Activated CD8-positive, alpha-beta memory T cell treated with anti-CD3 and anti-CD28 coated beads, Interleukin-2, amount 10 ng/mL, durations not matched to agents 7 days and 5 days (primary cell): ENCODE measurements at regions of chr1 and their contacts with region 1.

Region 1: DNA sequence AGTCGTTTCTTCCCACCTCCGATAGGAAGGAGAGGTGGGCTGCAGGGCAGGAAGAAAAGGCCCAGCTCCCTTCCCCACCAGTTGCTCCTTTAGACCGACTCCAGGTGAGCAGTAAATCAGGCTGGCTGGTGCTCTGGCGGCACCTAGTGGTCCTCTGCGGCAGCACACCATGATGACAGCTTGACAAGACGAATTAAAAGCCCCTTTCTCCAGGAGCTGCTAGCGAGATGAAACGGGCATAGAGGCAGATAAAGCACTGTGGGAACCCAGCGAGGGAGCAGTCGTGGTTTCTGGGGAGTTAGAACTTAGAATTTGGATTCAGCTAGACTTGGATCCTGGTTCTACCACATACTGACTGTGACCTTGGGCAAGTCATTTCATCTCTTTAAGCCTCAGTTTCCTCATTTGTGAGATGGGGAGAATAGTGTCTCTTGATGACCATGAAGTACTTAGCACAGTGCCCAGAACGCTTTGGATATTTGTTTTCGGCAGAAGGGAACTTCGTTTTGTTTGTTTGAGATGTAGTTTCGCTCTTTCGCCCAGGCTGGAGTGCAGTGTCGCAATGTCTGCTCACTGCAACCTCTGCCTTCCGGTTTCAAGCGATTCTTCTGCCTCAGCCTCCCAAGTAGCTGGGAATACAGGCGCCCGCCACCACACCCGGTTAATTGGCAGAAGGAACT is 21.8 kb upstream of the COL9A2 start:
- DNase-seq: peak; percentile 94
- ATAC-seq: peak; percentile 89
- H3K4me3 Mint-ChIP-seq: no peak overlapping the region
- H3K27ac Mint-ChIP-seq: no peak overlapping the region
- H3K4me1 Mint-ChIP-seq: peaks cover 46% of the 10 kb centered on the region
- H3K27me3 Mint-ChIP-seq: peaks cover 2% of the 10 kb centered on the region

Region 2: DNA sequence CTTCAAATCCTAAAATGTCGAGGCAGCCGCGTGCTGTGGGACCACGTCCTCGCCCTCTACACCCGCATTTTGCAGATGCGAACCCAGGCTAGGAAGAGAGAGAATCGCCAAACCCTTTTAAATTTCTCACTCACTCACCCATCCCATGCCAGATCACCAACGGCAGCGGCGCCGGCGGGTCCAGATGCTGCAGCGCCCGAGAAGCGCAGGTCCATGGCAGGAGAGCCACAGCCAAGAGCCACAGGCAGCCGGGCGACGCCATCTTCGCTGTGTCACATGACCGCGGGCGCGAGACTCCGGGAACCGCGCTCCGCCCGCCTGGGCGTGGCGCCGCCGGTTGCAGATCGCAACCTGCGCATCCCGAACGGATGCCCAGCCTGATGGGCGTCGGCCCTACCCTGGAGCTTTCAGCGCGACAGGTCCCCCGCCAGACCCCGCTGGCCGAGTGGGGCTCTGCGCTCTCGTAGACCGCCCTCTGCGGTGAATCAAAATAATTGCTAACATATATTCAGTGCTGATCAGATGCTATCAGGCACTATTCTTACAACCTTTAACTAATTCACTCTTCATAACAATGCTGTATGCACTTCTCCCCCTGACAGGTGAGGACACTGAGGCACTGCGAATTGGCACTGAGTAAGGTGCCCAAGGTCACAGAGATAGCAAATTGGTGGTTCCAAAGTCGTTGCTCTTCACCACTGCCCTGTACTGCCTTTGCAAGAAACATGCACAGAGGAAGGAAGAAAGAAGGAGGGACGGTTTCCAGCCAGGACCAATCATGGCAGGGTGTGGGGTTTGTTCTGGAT is 241.7 kb before region 1 on chr1 and contains the start of gene PPT1:
- CTCF ChIA-PET with region 1: interaction called, 20 read pairs
- DNase-seq: peak; percentile 87
- ATAC-seq: peak; percentile 95
- H3K4me3 Mint-ChIP-seq: peak within 1 kb of the TSS; percentile 84
- H3K27ac Mint-ChIP-seq: peak within 1 kb of the TSS; percentile 89
- H3K4me1 Mint-ChIP-seq: peaks cover 38% of the 10 kb centered on the region
- H3K27me3 Mint-ChIP-seq: peaks cover 7% of the 10 kb centered on the region
- total RNA-seq, gene PPT1: 74.1 to 96.6 TPM

Region 3: DNA sequence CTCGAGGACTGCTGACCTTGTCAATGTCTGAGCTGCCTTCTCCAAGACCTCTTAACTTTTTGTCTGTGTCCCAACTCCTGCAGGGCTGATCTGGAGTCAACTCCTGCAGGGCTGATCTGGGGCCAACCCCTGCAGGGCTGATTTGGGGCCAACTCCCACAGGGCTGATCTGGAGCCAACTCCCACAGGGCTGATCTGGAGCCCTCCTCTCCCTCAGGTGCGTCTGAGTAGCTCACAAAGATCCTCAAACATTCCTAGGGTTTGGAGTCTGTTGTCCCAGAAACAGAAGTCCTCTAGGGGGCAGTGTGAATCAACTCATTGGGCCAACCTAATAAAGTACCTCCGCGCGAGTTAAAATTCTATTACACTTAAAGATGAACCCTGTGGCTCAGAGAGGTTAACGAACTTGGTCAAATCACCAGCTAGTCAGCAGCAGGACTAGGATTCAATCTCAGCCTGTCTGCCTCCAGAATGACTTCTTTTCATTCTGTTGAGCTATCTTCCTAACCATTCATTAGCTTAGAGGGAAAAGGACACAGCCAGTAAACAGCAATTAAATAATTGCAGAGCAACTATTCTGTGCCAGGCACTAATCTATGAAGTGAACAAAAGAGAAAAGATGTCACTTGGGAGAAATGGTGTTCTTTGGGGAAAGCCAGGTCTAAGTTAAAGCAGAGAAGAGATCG is 194.9 kb before region 1 on chr1:
- CTCF ChIA-PET with region 1: interaction called, 55 read pairs
- DNase-seq: peak; percentile 68
- ATAC-seq: peak; percentile 83
- H3K4me3 Mint-ChIP-seq: no peak overlapping the region
- H3K27ac Mint-ChIP-seq: no peak overlapping the region
- H3K4me1 Mint-ChIP-seq: peaks cover 16% of the 10 kb centered on the region
- H3K27me3 Mint-ChIP-seq: peaks cover 38% of the 10 kb centered on the region

Region 4: DNA sequence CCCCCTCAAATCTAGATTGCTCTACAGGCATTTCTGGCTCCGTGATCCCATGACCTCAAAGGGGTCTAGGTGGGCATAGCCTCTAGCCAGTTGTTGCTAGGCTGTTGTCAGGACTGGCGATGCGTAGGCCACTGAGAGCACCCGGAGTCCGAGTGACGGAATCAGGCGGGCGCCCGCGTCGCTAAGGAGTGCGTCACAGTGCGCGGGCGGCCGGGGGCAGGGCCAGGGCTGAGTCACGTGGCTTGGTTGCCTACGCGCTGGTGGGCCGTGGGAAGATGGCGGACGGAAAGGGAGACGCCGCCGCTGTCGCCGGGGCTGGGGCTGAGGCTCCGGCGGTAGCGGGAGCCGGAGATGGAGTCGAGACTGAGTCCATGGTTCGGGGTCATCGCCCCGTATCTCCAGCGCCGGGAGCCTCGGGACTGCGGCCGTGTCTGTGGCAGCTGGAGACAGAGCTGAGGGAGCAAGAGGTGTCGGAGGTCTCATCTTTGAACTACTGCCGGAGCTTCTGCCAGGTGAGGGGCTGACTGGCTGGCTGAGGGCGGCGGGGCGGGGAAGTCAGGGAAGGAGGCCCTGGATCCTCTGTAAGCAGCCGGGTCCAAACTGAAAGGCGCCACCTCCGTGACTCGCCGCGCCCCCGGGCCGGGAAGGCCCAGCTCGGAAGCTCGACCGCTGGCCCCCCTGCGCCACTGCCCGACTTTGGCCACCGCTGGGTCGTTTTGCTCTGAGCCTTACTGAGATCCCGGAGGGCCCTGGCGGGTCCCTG is 177.6 kb before region 1 on chr1 and contains the start of gene RLF:
- CTCF ChIA-PET with region 1: interaction called, 216 read pairs
- DNase-seq: peak; percentile 96
- ATAC-seq: peak; percentile 97
- H3K4me3 Mint-ChIP-seq: no peak within 1 kb of the TSS
- H3K27ac Mint-ChIP-seq: peak within 1 kb of the TSS; percentile 35
- H3K4me1 Mint-ChIP-seq: peaks cover 9% of the 10 kb centered on the region
- H3K27me3 Mint-ChIP-seq: no peaks in the 10 kb centered on the region
- total RNA-seq, gene RLF: 18.8 to 21.4 TPM

Region 5: DNA sequence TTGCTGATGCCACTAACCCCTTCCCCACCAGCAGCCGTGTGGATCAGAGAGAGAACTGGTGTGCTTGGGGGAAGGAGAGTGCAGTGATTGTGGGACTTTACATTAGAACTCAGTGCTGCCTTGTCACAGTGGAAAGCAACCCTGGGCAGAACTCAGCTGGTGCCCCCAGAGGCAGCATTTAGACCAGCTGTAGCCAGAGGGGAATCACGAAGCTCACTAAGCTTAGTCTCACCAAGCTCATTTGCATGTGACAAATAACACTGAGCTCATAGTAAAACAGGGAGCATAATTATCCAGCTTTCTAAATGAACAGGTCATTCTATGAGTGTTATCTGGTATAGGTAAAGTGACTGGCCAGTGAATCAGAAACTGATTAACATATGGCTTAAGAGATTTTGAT is 24.8 kb after region 1 on chr1:
- CTCF ChIA-PET with region 1: interaction called, 11 read pairs
- DNase-seq: no peak
- ATAC-seq: no peak
- H3K4me3 Mint-ChIP-seq: no peak overlapping the region
- H3K27ac Mint-ChIP-seq: no peak overlapping the region
- H3K4me1 Mint-ChIP-seq: peaks cover 12% of the 10 kb centered on the region
- H3K27me3 Mint-ChIP-seq: no peaks in the 10 kb centered on the region

Region 6: DNA sequence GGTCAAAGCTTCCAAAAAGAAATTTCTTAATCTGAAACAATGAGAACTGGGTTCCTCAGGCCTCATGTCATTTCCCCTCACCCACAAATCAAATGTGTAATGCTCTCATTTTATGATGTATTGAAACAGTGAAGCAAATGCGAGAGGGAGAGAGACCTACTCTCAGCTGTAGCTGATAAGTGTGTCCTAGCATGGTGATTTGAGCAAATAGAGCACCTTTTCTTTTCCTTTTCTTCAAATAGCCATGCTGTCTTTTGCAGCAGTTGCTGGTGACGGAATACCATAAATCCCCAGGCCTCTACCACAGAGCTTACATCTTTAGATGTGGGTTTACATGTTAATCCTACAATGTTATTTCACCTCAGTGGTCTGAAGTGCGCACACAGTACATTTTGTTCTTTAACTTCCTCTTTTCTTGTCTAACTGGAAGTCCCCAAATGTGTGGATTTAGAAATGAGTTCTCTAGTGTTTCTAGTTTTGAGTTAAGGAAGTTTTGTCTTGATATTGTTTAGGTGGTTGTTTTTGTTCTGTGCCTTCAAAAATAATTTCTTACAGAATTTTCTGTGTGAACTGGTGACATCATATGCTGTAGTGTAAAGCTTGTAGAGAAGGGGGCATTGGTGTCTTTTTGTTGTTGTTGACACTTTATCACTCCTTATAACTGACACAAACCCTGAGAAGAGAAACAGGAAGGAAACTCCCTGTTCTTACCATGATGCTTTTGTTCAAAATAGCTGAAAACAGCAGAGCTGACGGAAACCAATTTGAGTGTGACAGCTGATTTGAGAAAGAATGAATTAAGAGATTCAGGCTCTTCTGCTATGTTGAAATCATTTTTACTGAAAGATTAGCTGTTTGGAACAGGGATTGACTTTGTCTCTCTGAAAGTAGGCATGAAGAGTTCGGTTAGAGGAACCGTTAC is 46.8 kb after region 1 on chr1:
- CTCF ChIA-PET with region 1: interaction called, 28 read pairs
- DNase-seq: peak; percentile 77
- ATAC-seq: peak; percentile 54
- H3K4me3 Mint-ChIP-seq: peak overlapping the region; percentile 72
- H3K27ac Mint-ChIP-seq: peak overlapping the region; percentile 98
- H3K4me1 Mint-ChIP-seq: peaks cover 92% of the 10 kb centered on the region
- H3K27me3 Mint-ChIP-seq: no peaks in the 10 kb centered on the region